Lower leg skin (tissue), 4 donors: ENCODE measurements at regions of chr6 and their contacts with region 1.

Region 1: DNA sequence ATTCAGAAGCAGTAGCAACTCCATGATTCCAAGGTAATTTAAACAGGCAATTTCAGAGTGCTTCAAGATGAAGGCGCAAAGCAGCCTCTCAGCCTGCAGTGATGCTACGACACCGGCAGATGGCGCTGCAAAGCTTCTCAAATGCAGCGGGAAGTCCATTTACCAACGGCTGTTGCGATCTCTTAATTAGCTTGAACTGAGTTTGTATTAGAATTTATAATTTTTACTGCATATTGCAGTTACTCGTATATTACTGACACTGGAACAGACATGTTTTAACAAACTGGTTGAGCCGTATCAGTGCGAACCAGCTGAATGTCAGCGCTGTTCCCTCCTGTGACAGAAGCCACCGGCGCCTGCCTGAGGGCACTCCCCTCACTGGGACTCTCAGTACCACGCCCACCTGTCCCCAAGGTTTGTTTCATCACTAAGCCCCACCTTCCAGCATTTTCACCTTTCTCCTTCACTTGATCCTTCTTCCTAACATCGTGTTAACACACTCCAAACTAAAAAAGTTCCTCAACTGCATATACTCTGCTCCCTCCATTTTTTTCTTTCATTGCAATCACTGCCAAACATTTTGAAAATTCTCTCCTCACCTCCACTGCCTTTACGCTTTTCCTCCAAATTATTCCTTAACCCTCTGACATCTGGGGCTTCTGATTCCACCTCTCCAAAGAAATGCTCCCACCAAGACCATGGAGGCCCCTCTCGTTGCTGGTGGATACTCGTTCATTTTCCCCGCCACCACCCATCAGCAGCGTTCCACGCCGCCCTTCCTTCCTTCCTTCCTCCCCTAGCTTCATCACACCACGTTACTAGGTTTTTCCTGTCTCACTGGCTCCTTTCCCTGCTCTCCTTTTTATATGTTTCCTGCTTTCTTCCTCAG is 14.5 kb downstream of the GNL1 start:
- DNase-seq: peak; percentile 68 to 94
- H3K4me3 ChIP-seq: no peak overlapping the region
- CTCF ChIP-seq: peak in 1 of 3 donors; percentile 57
- POLR2A ChIP-seq: no peak

Region 2: DNA sequence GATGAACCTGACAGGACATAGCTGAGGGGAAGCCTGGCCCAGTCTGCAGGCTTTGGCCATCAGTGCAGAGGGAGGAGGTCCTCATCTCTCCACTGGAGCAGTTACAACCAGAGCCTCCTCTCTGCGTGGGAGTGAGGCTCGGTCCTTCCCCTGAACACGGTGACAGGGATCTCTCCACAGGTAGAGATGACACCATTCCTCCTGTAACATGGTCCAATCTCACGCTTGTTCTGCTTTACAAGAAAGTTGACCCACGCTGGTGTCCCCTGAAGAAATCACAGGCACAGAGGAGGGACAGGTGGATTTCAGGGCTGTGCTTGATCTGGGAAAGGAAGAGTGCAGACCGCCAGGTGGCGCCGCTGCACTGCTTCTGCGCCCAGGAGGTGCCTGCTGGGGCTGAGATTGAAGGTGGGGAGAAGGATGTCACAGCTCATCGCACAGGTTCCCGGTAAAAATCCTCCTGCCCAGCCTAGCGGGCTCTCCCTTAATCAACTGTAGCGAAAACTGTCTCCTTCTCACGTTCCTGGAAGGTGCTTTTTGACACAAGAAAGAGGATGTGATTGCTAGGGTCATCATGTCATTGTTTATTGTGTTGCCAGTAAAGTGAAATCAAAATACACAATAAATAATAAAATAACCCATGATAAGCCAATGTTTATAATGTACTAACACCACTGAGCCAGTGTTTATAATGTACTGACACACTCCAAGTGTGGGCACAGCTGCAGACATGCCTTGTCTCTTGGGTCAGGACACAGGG is 693.7 kb before region 1 on chr6:
- intact Hi-C with region 1: no loop called
- DNase-seq: peak; percentile 69 to 96
- H3K4me3 ChIP-seq: no peak overlapping the region
- CTCF ChIP-seq: peak in 1 of 3 donors; percentile 86
- POLR2A ChIP-seq: no peak

Region 3: GRCh38 chr6:30483677-30484279 is 58.0 kb before region 1 on chr6:
- intact Hi-C with region 1: loop called (anchors 5 kb)
- DNase-seq: no peak
- H3K4me3 ChIP-seq: no peak overlapping the region
- CTCF ChIP-seq: no peak
- POLR2A ChIP-seq: no peak

Region 4: GRCh38 chr6:30556066-30556905 is 14.5 kb after region 1 on chr6 and contains the start of gene GNL1:
- intact Hi-C with region 1: no loop called
- DNase-seq: peak; percentile 94 to 99
- H3K4me3 ChIP-seq: peak within 1 kb of the TSS; percentile 69
- CTCF ChIP-seq: peak in 1 of 3 donors; percentile 24
- POLR2A ChIP-seq: no peak
- total RNA-seq, gene GNL1: 30.4 to 39.6 (median 33.4) TPM

Region 5: DNA sequence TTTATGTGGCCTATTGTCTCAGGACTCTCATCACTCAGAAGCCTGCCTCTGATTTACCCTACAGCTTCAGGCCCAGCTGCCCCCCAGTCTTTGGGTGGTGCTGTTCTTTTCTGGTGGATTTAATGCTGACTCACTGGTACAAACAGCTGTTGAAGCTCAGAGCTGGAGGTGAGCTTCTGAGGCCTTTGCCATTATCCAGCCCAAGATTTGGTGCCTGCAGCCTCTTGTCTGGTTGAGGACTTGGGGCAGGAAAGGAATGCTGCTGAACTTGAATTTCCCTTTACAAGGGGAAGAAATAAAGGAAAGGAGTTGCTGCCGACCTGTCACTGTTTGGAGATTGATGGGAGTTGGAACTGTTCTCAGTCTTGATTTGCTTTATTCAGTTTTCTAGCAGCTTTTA is 49.2 kb after region 1 on chr6:
- intact Hi-C with region 1: loop called (anchors 10 kb)
- DNase-seq: peak in 1 of 2 donors; percentile 47
- H3K4me3 ChIP-seq: no peak overlapping the region
- CTCF ChIP-seq: no peak
- POLR2A ChIP-seq: no peak